Activated CD4-positive, alpha-beta memory T cell treated with anti-CD3 and anti-CD28 coated beads for 36 hours (primary cell): ENCODE measurements at regions of chr10 and their contacts with region 1.

Region 1: DNA sequence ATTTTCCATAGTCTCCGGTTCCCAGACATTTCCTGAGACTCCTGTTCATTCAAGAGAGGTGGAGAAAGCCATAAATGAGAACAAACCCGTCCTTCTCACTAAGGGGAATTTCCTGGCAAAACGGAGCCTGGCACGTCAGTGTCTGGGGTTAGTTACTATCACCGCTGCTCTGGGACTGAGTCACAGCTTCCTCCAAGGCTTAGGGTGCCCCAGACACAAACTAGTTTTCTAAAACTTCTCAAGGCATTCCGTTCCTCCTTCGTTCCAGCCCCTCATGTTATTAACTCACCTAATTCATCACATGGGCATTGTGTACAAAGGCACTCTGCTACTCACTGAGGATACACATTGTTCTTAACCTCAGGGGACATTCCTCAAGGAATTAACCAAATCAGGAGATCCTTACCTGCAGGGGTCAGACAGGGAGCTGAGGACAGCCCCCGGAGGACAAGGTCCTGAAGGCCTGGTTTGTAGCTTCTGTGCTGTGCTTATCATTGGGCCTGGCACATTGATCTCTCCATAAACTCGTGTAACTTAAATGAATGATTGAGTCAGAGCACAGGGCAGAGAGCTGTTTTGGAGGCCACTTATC is 103.0 kb upstream of the KLF6 start:
- DNase-seq: peak; percentile 87
- H3K4me3 Mint-ChIP-seq: peak overlapping the region; percentile 58
- H3K27ac Mint-ChIP-seq: peak overlapping the region; percentile 96
- H3K4me1 Mint-ChIP-seq: peaks cover 68% of the 10 kb centered on the region
- H3K27me3 Mint-ChIP-seq: no peaks in the 10 kb centered on the region

Region 2: GRCh38 chr10:3828404-3829155 is 59.4 kb before region 1 on chr10:
- CTCF ChIA-PET with region 1: no interaction called
- POLR2A ChIA-PET with region 1: interaction called, 3 read pairs
- intact Hi-C with region 1: loop called (anchors 2 kb)
- DNase-seq: peak; percentile 70
- H3K4me3 Mint-ChIP-seq: peak overlapping the region; percentile 56
- H3K27ac Mint-ChIP-seq: peak overlapping the region; percentile 97
- H3K4me1 Mint-ChIP-seq: peaks cover 63% of the 10 kb centered on the region
- H3K27me3 Mint-ChIP-seq: no peaks in the 10 kb centered on the region

Region 3: GRCh38 chr10:3902054-3902808 is 14.2 kb after region 1 on chr10:
- CTCF ChIA-PET with region 1: no interaction called
- POLR2A ChIA-PET with region 1: no interaction called
- intact Hi-C with region 1: loop called (anchors 1 kb)
- DNase-seq: peak; percentile 69
- H3K4me3 Mint-ChIP-seq: no peak overlapping the region
- H3K27ac Mint-ChIP-seq: peak overlapping the region; percentile 79
- H3K4me1 Mint-ChIP-seq: peaks cover 45% of the 10 kb centered on the region
- H3K27me3 Mint-ChIP-seq: no peaks in the 10 kb centered on the region

Region 4: GRCh38 chr10:3955493-3955892 is 67.5 kb after region 1 on chr10:
- CTCF ChIA-PET with region 1: no interaction called
- POLR2A ChIA-PET with region 1: no interaction called
- intact Hi-C with region 1: no loop called
- DNase-seq: no peak
- H3K4me3 Mint-ChIP-seq: no peak overlapping the region
- H3K27ac Mint-ChIP-seq: no peak overlapping the region
- H3K4me1 Mint-ChIP-seq: peaks cover 13% of the 10 kb centered on the region
- H3K27me3 Mint-ChIP-seq: no peaks in the 10 kb centered on the region